ENCODE measurements at regions of chr15 and their contacts with region 1.

Region 1: GRCh38 chr15:45891766-45892165 is 256.9 kb downstream of the SQOR start:
- DNase-seq: peak; percentile 77
- H3K4me3 ChIP-seq: no peak overlapping the region
- H3K27ac ChIP-seq: peak overlapping the region in 1 of 2 donors; percentile 22
- H3K4me1 ChIP-seq: no peaks in the 10 kb centered on the region
- H3K27me3 ChIP-seq: no peaks in the 10 kb centered on the region
- CTCF ChIP-seq: no peak
- POLR2A ChIP-seq: no peak

Region 2: GRCh38 chr15:45634442-45635190 is 257.1 kb before region 1 on chr15 and contains the start of gene SQOR:
- intact Hi-C with region 1: loop called (anchors 10 kb)
- DNase-seq: peak; percentile 88
- H3K4me3 ChIP-seq: peak within 1 kb of the TSS; percentile 72 to 79
- H3K27ac ChIP-seq: peak within 1 kb of the TSS; percentile 88 to 93
- H3K4me1 ChIP-seq: no peaks in the 10 kb centered on the region
- H3K27me3 ChIP-seq: no peaks in the 10 kb centered on the region
- CTCF ChIP-seq: peak in 2 of 4 experiments; percentile 17 to 20
- POLR2A ChIP-seq: peak; percentile 85
- total RNA-seq, gene SQOR: 29.4 to 83.8 TPM

Region 3: DNA sequence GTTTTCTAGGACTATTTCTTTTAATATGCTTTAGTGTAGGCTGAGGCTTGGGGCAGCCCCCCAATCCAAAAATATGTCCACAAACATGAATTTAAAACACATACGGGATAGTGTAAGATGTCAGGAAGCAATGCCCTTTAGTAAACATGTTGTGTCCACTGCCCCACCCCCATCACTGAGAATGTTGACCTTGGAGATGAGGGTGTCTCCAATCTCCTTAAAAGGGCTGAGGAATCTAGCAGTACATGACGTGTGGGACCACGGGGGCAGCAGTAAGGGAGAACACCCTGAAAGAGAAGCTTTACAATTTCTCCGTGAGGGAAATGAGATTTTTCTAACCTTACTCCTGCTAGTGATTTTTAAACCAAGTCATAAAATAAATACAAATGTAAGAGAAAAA is 172.3 kb before region 1 on chr15:
- intact Hi-C with region 1: no loop called
- DNase-seq: no peak
- H3K4me3 ChIP-seq: no peak overlapping the region
- H3K27ac ChIP-seq: no peak overlapping the region
- H3K4me1 ChIP-seq: no peaks in the 10 kb centered on the region
- H3K27me3 ChIP-seq: no peaks in the 10 kb centered on the region
- CTCF ChIP-seq: no peak
- POLR2A ChIP-seq: no peak

Region 4: DNA sequence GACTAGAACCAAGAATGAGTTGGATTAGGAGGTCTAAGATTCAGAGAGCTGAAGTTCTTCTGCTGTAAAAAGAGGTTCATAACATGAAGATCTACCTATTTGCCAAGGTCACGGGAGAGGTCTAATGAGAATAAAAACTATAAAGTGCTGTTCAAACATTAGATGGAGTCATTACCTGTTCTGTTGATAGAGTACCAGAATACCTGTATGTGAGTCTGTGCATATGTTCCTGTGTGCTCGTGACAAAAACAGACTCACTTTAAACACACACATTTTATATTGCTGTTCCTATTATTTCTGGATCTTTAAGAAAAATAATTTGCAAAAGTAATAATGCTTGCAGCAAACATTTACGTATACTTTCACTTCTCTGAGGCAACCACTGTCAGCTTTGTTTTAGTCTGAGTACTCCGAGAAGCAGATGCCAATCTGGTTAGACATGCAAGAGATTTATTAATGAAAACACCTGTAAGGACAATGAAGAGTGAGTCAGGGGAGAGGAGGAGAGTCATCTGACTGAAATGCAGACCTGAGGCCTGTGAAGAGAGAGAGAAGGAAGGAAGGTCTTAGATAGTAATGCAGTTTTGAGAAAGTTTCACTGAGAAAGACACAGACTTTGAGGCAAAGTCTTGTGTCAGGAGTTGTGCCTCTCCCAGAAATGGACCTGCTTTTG is 35.7 kb before region 1 on chr15:
- intact Hi-C with region 1: loop called (anchors 5 kb)
- DNase-seq: no peak
- H3K4me3 ChIP-seq: no peak overlapping the region
- H3K27ac ChIP-seq: peak overlapping the region; percentile 56 to 57
- H3K4me1 ChIP-seq: peaks cover 5% of the 10 kb centered on the region
- H3K27me3 ChIP-seq: no peaks in the 10 kb centered on the region
- CTCF ChIP-seq: no peak
- POLR2A ChIP-seq: no peak

Region 5: GRCh38 chr15:46322753-46323152 is 431.0 kb after region 1 on chr15:
- intact Hi-C with region 1: no loop called
- DNase-seq: no peak
- H3K4me3 ChIP-seq: no peak overlapping the region
- H3K27ac ChIP-seq: no peak overlapping the region
- H3K4me1 ChIP-seq: no peaks in the 10 kb centered on the region
- H3K27me3 ChIP-seq: no peaks in the 10 kb centered on the region
- CTCF ChIP-seq: no peak
- POLR2A ChIP-seq: no peak

Measured in prostate gland (tissue), 2 donors.